ENCODE measurements at regions of chr7 and their contacts with region 1.

Region 1: GRCh38 chr7:148962823-148963582 is 65.3 kb downstream of the PDIA4 start:
- DNase-seq: peak; percentile 47 to 62
- H3K4me3 ChIP-seq: peak overlapping the region; percentile 56
- H3K27ac ChIP-seq: no peak overlapping the region
- H3K4me1 ChIP-seq: no peaks in the 10 kb centered on the region
- H3K27me3 ChIP-seq: no peaks in the 10 kb centered on the region
- CTCF ChIP-seq: peak; percentile 85

Region 2: DNA sequence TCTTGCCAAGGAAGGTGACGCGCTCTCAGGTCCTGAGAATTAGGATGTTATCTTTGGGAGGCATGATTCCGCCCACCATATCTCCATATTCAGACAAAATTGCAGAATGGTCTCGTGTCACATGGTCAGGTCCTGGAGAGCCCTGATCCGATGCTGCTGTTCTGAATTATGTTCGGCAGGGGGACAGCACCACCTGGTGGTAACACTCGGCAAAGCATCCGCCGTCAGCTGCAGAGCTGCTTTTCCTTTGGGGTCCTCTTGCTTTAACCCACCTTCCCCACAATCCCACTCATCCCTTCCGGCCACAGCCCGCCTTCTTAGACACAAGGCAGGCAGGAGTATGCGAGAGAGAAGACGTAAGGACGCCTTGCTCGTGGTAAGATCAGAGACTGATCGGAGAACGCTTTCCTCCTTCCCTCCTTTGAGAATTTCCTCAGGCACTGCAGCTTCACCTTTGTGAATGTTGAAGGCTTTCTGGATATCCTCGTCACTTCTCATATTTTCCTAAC is 700.2 kb before region 1 on chr7:
- CTCF ChIA-PET with region 1: interaction called, 3 read pairs
- POLR2A ChIA-PET with region 1: no interaction called
- intact Hi-C with region 1: loop called (anchors 1 kb)
- DNase-seq: peak in 1 of 2 experiments; percentile 60
- H3K4me3 ChIP-seq: no peak overlapping the region
- H3K27ac ChIP-seq: no peak overlapping the region
- H3K4me1 ChIP-seq: no peaks in the 10 kb centered on the region
- H3K27me3 ChIP-seq: peaks cover 45% of the 10 kb centered on the region
- CTCF ChIP-seq: peak; percentile 95

Region 3: GRCh38 chr7:148575640-148576411 is 387.2 kb before region 1 on chr7:
- CTCF ChIA-PET with region 1: interaction called, 5 read pairs
- POLR2A ChIA-PET with region 1: no interaction called
- intact Hi-C with region 1: loop called (anchors 1 kb)
- DNase-seq: peak in 1 of 2 experiments; percentile 72
- H3K4me3 ChIP-seq: no peak overlapping the region
- H3K27ac ChIP-seq: no peak overlapping the region
- H3K4me1 ChIP-seq: no peaks in the 10 kb centered on the region
- H3K27me3 ChIP-seq: no peaks in the 10 kb centered on the region
- CTCF ChIP-seq: peak; percentile 92

Region 4: DNA sequence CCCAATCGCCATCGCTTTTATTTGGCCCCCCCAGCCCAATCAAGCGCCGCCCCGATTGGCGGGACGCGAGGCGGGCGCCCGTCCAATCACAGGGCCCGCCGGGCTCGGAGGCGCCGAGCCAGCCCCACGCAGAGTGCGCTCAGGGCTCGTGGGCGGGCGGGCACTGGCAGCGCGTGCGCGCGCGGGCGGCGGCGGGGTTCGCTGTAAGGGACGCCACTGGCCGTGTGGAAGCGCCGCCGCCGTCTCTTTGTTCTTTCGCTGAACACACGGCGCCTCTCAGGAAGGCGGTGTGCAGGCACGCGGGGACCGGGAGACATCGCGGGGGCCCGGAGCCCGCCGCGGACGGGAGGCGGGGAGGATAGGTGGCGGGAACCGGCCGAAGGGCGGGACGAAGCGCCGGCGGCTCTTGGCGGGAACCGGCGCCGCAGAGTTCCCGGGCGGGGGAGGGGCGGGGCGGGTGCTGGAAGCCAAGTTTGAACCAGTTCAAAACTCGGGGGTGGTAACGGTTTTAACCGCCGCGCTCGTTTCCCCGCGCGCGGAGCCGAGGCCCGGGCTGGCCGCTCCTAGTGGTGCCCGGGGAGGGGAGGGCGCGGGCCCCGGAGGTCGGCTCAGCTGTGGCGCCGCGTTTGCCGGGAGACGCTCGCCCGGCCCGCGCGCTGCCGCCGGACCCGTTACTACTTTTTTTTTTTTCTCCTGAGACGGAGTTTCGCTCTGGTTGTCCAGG is 78.5 kb before region 1 on chr7:
- CTCF ChIA-PET with region 1: interaction called, 3 read pairs
- POLR2A ChIA-PET with region 1: no interaction called
- intact Hi-C with region 1: loop called (anchors 2 kb)
- DNase-seq: peak; percentile 75 to 96
- H3K4me3 ChIP-seq: peak overlapping the region; percentile 88
- H3K27ac ChIP-seq: peak overlapping the region; percentile 68
- H3K4me1 ChIP-seq: peaks cover 14% of the 10 kb centered on the region
- H3K27me3 ChIP-seq: no peaks in the 10 kb centered on the region
- CTCF ChIP-seq: no peak

Region 5: GRCh38 chr7:149060156-149060555 is 97.2 kb after region 1 on chr7:
- CTCF ChIA-PET with region 1: interaction called, 6 read pairs
- POLR2A ChIA-PET with region 1: no interaction called
- intact Hi-C with region 1: loop called (anchors 1 kb)
- DNase-seq: no peak
- H3K4me3 ChIP-seq: no peak overlapping the region
- H3K27ac ChIP-seq: no peak overlapping the region
- H3K4me1 ChIP-seq: peaks cover 11% of the 10 kb centered on the region
- H3K27me3 ChIP-seq: no peaks in the 10 kb centered on the region
- CTCF ChIP-seq: no peak

Region 6: GRCh38 chr7:149090397-149091195 is 127.6 kb after region 1 on chr7 and contains the start of gene ZNF786:
- CTCF ChIA-PET with region 1: interaction called, 3 read pairs
- POLR2A ChIA-PET with region 1: no interaction called
- intact Hi-C with region 1: loop called (anchors 1 kb)
- DNase-seq: peak; percentile 71 to 87
- H3K4me3 ChIP-seq: peak within 1 kb of the TSS; percentile 96
- H3K27ac ChIP-seq: peak within 1 kb of the TSS; percentile 85
- H3K4me1 ChIP-seq: no peaks in the 10 kb centered on the region; the same call in 1 of the 2 replicates
- H3K27me3 ChIP-seq: no peaks in the 10 kb centered on the region
- CTCF ChIP-seq: peak; percentile 92
- total RNA-seq, gene ZNF786: 7.0 and 8.4 TPM in 2 replicates

Measured in PC-9 (cell line).